ENCODE measurements at regions of chr7 and their contacts with region 1.

Region 1: GRCh38 chr7:107150375-107151073 is 18.3 kb upstream of the HBP1 start:
- DNase-seq: peak; percentile 34
- CTCF ChIP-seq: peak; percentile 29

Region 2: DNA sequence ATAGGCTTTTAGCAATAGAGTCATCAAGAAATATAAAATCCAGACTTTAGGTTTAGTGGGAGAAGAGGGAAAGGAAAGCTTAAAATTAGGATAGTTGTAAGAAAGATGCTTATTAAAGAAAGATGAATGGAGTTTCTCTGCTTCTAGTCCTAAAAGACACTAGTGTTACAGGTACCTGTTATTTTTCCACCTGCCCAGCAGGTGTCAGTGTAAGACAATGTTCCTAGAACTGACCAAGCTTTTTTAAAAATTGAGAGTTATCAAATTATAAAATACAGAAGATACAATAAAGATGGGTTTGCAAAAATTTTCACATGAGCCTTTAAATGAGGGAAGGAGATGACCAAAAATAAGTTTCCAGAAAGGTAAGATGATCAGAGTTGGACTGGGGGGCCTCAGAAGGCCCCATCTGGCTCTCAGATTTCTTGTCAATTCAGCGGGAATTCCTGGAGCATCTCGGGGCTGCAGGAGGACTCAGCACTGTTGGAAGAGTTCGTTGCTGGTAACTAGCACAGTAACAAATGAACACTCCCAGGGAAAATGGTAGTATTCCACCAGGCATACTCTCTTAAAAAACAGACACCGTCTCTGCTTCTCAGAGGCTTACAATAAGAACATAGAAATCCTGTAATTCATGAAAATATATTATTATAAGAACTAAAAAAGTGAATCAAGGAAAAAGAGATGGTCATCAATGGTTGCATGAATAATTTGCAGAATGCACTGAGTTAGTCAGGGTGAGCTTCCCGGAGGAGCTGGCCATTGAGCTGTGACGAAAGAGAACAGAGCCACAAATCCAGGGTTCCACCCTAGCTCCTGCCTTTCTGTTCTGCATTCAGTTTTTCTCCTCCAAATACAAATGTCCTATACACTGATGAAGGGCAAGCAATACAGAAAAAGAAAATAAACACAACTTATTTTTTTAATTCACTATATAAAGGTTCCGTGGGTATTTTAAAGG is 357.2 kb before region 1 on chr7:
- CTCF ChIA-PET with region 1: interaction called, 95 read pairs
- POLR2A ChIA-PET with region 1: no interaction called
- DNase-seq: peak; percentile 42
- CTCF ChIP-seq: peak; percentile 68

Region 3: GRCh38 chr7:107122486-107122911 is 28.0 kb before region 1 on chr7:
- CTCF ChIA-PET with region 1: interaction called, 15 read pairs
- POLR2A ChIA-PET with region 1: no interaction called
- DNase-seq: no peak
- CTCF ChIP-seq: no peak

Region 4: DNA sequence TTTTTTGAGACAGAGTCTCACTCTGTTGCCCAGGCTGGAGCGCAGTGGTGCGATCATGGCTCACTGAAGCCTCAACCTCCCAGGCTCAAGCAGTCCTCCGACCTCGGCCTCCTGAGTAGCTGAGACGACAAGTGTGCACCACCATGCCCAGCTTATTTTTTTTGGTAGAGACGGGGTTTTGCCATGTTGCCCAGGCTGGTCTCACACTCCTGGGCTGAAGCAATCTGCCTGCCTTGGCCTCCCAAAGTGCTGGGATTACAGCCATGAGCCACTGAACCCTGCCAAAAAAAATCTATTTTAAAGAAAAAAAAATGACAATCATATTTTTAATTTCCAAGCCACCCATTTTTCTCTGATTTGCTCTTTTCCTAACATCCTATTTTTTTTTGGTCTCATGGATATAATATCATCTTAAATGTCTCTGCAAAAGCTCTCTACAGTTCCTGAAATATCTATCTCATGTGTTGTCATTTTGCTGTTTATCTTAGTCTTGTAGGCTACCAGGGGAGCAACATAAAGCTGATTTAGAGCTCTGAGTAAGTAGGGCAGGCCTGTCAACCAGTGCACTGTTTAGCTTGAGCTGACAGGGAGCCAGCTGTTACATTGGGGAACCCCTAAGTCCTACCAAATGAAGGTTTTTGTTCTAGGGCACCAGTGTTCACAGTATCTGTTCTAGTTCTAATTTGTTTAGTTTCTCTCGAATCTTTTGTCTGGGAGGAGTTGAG is 11.7 kb before region 1 on chr7:
- CTCF ChIA-PET with region 1: interaction called, 24 read pairs
- POLR2A ChIA-PET with region 1: no interaction called
- DNase-seq: no peak
- CTCF ChIP-seq: no peak

Region 5: DNA sequence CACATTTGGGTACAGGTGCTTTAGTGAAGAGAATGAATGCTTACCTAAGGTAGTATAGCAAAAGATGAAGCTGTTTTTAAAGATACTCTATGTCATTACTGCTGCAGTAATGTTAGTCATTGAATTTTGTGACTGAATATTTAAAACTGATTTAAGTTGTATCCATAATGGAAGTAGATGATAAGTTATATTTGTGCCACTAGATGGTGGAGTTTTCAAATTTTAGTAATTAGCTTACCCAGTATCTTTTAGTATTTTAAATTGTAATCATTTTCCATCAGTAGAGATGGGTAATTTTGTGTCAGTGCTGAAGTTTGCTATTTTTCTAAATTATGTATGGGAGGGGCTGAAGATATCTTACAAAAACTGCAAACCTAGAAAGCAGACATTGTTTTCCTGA is 43.5 kb after region 1 on chr7:
- CTCF ChIA-PET with region 1: no interaction called
- POLR2A ChIA-PET with region 1: no interaction called
- DNase-seq: no peak
- CTCF ChIP-seq: no peak

Region 6: DNA sequence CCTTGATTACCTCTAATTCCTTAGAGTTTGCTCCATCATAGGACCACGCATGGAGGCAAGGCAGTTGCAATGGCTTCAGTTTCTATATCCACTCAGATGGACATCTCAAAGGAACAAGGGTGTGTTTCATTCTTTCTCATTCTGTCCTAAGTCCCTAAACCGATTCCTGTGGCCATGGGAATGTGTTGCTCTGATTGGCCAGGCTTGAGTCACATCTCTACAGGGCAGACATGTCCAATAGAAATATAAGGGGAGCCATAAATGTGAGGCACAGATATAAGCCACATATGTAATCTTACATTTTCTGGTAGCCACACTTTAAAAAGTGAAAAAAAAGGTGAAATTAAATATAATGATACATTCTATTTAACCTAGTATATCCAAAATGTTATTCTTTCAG is 723.6 kb after region 1 on chr7:
- CTCF ChIA-PET with region 1: interaction called, 11 read pairs
- POLR2A ChIA-PET with region 1: no interaction called
- DNase-seq: no peak
- CTCF ChIP-seq: no peak